Transverse colon (tissue), 4 donors: ENCODE measurements at regions of chr11 and their contacts with region 1.

Region 1: DNA sequence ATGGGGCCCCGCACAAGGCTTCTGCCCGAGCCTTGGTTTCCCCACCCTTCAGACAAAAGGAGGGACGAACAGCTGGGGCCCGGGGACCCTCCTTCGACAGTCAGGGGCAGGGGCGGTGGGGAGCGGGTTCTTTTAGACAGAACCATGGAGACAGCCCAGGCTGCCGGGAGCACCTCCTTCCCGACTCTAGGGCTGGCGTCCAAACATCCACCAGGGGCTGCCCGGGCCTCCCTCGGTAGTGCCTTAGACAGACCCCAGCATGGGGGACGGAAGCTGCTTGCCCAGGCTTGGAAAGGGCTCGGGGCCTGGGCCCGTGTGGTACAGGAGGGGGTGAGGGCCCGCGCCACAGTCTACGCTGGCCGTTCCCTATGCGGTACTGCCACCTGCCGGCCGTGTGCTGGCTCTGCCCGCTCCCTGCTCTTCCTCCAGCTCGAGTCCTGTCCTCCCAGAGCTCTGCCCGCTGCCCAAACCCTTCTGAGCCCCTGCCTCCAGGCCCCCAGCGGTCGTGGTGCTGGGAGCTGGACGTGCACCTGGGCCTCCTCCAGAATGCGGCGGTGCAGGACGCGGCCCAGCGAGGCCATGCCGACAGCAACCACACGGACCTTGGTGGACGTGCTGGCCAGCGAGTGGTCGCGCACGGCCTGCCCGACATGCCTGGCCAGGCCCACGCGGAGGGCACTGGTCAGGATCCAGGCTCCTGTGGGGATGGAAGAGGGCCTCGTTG is 20.1 kb downstream of the TSSC4 start:
- DNase-seq: peak; percentile 73
- H3K4me3 ChIP-seq: peak overlapping the region in 2 of 4 donors; percentile 3 to 19
- H3K27ac ChIP-seq: peak overlapping the region in 1 of 4 donors; percentile 48
- H3K4me1 ChIP-seq: peaks cover 6 to 15% (median 11%) of the 10 kb centered on the region in 4 donors
- H3K27me3 ChIP-seq: peaks cover 33% of the 10 kb centered on the region
- CTCF ChIP-seq: peak; percentile 90 to 96 (median 92)
- EP300 ChIP-seq: no peak
- POLR2A ChIP-seq: no peak

Region 2: GRCh38 chr11:2202055-2202899 is 218.4 kb before region 1 on chr11:
- in situ Hi-C with region 1: loop called (anchors 5 to 25 kb)
- intact Hi-C with region 1: loop called (anchors 1 kb)
- DNase-seq: peak; percentile 84
- H3K4me3 ChIP-seq: no peak overlapping the region
- H3K27ac ChIP-seq: peak overlapping the region; percentile 8 to 65 (median 47)
- H3K4me1 ChIP-seq: peaks cover 0 to 23% (median 16%) of the 10 kb centered on the region in 4 donors
- H3K27me3 ChIP-seq: no peaks in the 10 kb centered on the region
- CTCF ChIP-seq: no peak
- EP300 ChIP-seq: no peak
- POLR2A ChIP-seq: peak; percentile 41

Region 3: DNA sequence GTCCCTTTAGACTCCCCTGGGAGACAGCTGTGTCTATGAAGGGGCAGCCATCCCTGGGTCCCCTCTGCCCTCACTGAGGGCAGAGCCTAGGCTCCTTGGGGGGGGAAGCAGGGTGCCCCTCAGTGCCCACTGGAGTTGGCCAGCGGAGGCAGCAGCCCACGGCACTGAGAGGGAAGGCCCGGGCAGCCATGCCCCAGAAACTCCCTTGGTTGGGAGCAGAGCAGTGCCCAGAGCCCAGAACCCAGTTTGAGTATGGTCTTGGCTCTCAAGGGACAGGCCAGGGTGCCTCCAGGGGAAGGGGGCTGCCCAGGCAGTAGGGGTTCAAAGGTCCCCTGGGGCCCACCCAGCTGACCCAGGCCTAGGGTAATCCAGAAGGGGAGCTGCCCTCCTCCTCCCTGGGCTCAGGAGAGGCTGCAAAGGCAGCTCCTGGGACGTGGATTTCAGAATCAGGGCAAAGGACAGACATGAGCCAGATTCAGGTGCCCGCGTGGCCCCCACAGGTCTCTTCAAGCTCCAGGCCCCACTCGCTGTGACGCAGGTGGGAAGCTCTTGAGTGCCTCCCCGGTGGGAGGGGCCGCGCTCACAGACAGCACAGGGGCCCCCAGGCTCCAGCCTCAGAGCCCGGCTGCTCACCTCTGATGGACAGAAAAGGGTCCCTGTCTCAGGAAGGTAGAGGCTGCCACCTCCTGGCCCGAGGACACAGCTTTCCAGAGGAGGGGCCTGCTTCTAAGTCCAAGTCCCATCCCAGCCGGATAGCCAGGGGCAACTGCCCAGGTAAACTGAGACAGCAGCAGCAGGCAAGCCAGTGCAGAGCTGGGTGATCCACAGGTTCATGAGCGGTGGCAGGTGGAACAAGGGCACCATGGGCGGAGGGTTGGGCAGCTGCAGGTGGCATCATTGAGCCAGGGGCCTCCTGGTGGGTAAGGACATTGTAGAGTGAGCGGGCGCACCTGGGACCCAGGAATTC is 121.6 kb before region 1 on chr11:
- in situ Hi-C with region 1: loop called in 1 of 4 experiments (anchors 10 kb)
- intact Hi-C with region 1: loop called (anchors 2 kb)
- DNase-seq: peak; percentile 44
- H3K4me3 ChIP-seq: no peak overlapping the region
- H3K27ac ChIP-seq: no peak overlapping the region
- H3K4me1 ChIP-seq: peaks cover 0 to 20% (median 5%) of the 10 kb centered on the region in 4 donors
- H3K27me3 ChIP-seq: no peaks in the 10 kb centered on the region
- CTCF ChIP-seq: peak in 4 of 5 experiments; percentile 30 to 50 (median 39)
- EP300 ChIP-seq: no peak
- POLR2A ChIP-seq: no peak

Region 4: GRCh38 chr11:2314525-2315394 is 105.9 kb before region 1 on chr11:
- in situ Hi-C with region 1: loop called in 3 of 4 experiments (anchors 10 kb)
- intact Hi-C with region 1: no loop called
- DNase-seq: peak; percentile 67
- H3K4me3 ChIP-seq: no peak overlapping the region
- H3K27ac ChIP-seq: peak overlapping the region; percentile 71 to 84 (median 76)
- H3K4me1 ChIP-seq: peaks cover 7 to 25% (median 14%) of the 10 kb centered on the region in 4 donors
- H3K27me3 ChIP-seq: no peaks in the 10 kb centered on the region
- CTCF ChIP-seq: no peak
- EP300 ChIP-seq: no peak
- POLR2A ChIP-seq: no peak

Region 5: DNA sequence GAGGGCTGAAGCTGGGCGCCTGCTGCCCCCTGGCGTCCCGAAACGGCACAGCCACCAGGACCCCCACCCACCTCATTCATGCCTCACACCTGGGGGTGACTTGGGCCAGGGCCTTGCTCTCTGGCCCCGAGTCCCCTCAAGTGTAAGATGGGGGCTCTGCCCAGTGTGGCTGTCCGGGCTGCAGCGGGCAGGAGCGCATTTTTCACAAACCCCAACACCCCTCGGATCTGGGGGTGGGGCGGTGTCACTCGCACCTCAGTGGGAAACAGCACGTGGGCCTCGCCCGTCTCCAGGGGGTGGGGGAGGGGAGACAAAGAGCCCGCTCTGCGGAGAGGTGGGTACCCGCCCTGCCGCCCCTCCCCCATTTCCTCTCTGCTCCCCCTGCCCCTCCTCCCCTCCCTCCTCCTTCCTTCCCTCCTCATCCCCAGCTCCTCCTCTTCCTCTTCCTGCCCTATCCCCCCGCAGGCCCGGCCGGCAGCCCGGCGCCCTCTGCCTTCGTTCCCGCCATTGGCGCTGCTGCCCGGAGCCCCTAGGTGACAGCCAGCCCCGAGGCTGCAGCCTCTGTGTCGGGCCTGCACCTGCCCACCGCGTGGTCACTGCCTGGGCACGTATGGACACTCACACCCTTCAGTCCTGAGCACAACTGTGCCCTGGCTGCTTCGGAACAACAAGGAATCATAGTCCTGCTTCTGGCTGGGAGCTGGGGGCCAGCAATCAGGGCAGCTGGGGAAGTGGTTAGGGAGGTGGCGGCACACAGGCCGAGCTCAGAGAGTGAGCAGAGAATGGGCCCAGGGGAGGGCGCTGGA is 471.8 kb after region 1 on chr11:
- in situ Hi-C with region 1: loop called in 3 of 4 experiments (anchors 5 to 25 kb)
- intact Hi-C with region 1: loop called (anchors 10 kb)
- DNase-seq: peak; percentile 67
- H3K4me3 ChIP-seq: peak overlapping the region; percentile 11 to 45 (median 24)
- H3K27ac ChIP-seq: peak overlapping the region; percentile 18 to 59 (median 57)
- H3K4me1 ChIP-seq: peaks cover 21 to 32% (median 28%) of the 10 kb centered on the region in 4 donors
- H3K27me3 ChIP-seq: no peaks in the 10 kb centered on the region
- CTCF ChIP-seq: peak; percentile 85 to 96 (median 96)
- EP300 ChIP-seq: no peak
- POLR2A ChIP-seq: peak; percentile 14